ENCODE measurements at regions of chr17 and their contacts with region 1.

Region 1: DNA sequence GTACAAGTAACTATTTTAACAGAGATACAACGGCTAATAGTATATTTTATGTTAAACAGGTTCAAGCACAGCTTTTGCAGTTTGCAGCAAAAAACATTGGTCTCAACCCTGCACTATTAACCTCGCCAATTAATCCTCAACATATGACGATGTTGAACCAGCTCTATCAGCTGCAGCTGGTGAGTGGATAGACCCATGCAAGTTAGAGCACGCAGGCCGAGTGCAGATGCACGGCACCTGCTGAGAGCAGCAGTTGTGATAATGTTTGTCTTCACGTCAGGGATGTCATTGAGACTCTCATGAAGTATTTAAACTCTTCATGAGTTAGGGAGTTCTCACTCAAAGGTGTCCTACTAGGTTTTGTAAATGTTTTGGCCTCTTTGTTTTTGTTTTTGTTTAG is 45.6 kb downstream of the TMC6 start:
- DNase-seq: no peak
- H3K4me3 ChIP-seq: no peak overlapping the region
- H3K27ac ChIP-seq: no peak overlapping the region
- H3K27me3 ChIP-seq: no peaks in the 10 kb centered on the region
- CTCF ChIP-seq: no peak

Region 2: DNA sequence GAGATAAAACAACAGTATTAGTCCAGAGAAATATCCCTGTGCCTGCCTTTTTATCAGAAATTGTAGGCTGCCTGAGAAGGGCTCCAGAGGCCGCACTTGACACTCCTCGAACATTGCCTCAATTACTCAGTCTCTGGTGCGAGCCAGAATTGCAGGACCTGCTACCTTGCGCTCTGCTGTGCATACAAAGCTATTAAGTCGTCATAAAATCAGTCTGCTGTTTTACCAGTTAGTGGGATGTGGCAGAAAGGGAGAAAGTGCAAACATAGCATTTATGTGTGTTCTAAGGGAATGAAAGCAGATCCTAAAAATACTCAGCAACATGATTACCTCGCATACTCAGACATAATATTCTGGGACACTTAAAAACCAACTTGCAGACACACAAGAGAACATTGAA is 25.0 kb before region 1 on chr17:
- CTCF ChIA-PET with region 1: interaction called, 16 read pairs
- POLR2A ChIA-PET with region 1: no interaction called
- DNase-seq: no peak
- H3K4me3 ChIP-seq: no peak overlapping the region
- H3K27ac ChIP-seq: no peak overlapping the region
- H3K27me3 ChIP-seq: no peaks in the 10 kb centered on the region
- CTCF ChIP-seq: no peak

Region 3: DNA sequence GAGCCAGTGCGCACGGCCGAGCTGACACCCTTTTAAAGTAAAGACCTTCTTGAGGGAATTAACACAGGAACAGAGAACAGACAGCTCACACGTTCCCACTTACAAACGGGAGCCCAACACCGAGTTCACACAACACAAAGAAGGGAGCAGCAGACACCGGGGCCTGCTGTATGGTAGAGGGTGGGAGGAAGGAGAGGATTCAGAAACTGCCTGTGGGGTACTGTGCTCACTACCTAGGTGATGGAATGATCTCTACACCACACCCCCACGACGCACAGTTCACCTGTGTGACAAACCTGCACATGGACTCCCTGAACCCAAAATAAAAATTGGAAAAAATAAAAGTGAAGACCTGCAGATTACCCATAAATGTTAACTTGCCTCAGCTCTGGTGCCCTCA is 13.1 kb after region 1 on chr17:
- CTCF ChIA-PET with region 1: interaction called, 10 read pairs
- POLR2A ChIA-PET with region 1: no interaction called
- DNase-seq: no peak
- H3K4me3 ChIP-seq: no peak overlapping the region
- H3K27ac ChIP-seq: no peak overlapping the region
- H3K27me3 ChIP-seq: no peaks in the 10 kb centered on the region
- CTCF ChIP-seq: no peak